Activated CD4-positive, alpha-beta T cell treated with anti-CD3 and anti-CD28 coated beads, Interleukin-2, amount 10 ng/mL, durations not matched to agents 24 days and 14 days (primary cell): ENCODE measurements at regions of chr3 and their contacts with region 1.

Region 1: DNA sequence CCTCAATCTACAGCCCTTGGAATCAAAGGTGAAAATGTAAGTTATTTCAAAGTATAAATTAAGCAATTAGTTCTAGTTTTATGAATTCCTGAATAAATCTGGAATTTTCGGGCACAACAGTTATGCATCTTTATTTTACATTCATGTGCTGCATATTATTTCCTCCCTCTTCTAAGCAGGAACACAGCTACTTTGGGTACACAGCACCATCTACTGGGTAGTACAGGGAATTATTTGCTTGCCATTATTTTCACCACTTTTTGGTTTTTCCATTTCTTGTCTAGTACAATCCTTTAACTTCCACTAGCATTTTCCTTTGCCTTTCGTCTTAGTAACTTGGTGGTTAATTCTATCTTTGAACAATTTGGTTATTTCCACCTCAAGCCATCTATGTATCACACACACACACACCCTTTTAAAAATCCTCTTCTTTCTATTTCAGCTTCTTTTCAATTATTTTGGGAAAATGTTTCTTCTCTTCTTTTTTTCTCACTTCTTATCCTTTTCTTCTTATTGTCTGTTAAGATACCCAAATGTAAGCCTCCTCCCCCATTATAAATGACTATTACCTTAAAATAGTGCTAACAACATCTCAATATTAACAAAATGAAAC is 451.0 kb downstream of the MFSD1 start:
- DNase-seq: no peak
- H3K4me3 Mint-ChIP-seq: no peak overlapping the region
- H3K27ac Mint-ChIP-seq: no peak overlapping the region
- H3K4me1 Mint-ChIP-seq: no peaks in the 10 kb centered on the region
- H3K27me3 Mint-ChIP-seq: no peaks in the 10 kb centered on the region

Region 2: GRCh38 chr3:158918008-158918407 is 334.9 kb before region 1 on chr3:
- intact Hi-C with region 1: loop called (anchors 10 kb)
- DNase-seq: peak; percentile 61
- H3K4me3 Mint-ChIP-seq: no peak overlapping the region
- H3K27ac Mint-ChIP-seq: no peak overlapping the region
- H3K4me1 Mint-ChIP-seq: no peaks in the 10 kb centered on the region
- H3K27me3 Mint-ChIP-seq: no peaks in the 10 kb centered on the region

Region 3: DNA sequence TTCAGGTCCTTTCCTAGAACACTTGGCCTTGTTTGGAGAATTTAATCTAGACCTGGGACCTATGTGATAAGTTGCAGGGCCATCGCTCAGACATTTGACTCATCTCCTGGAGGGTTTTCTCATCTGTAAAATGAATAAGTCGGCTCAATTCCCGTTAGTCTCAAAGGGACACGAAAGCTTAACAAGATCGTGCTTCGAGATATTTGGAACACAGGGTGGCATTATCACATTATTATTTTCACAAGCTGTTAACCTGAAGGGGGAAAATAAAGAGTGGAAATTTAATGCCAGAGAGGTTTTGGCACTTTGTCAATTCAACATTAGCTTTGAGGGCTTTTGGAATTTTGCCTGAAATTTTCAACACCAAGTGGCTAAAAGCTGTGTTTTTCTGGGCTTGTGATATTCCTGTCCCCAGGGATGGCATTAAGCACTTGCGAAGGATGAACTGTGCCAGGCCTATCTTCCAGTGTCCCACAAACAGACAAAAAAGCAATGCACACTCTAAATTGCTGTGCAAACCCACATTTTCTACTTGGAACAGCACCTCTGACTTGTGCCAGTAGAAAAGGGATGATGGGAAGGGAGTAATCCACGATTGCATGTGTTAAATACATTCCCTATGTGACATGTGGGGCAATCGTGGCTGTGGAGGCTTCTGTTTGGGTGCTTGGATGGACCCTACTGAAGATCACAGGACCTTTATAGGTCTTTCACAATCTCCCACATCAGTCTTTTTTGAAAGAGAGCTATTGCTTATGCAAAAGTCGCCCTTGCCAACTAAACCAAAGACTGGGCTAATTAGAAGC is 27.7 kb after region 1 on chr3:
- intact Hi-C with region 1: no loop called
- DNase-seq: no peak
- H3K4me3 Mint-ChIP-seq: no peak overlapping the region
- H3K27ac Mint-ChIP-seq: no peak overlapping the region
- H3K4me1 Mint-ChIP-seq: no peaks in the 10 kb centered on the region
- H3K27me3 Mint-ChIP-seq: no peaks in the 10 kb centered on the region

Region 4: DNA sequence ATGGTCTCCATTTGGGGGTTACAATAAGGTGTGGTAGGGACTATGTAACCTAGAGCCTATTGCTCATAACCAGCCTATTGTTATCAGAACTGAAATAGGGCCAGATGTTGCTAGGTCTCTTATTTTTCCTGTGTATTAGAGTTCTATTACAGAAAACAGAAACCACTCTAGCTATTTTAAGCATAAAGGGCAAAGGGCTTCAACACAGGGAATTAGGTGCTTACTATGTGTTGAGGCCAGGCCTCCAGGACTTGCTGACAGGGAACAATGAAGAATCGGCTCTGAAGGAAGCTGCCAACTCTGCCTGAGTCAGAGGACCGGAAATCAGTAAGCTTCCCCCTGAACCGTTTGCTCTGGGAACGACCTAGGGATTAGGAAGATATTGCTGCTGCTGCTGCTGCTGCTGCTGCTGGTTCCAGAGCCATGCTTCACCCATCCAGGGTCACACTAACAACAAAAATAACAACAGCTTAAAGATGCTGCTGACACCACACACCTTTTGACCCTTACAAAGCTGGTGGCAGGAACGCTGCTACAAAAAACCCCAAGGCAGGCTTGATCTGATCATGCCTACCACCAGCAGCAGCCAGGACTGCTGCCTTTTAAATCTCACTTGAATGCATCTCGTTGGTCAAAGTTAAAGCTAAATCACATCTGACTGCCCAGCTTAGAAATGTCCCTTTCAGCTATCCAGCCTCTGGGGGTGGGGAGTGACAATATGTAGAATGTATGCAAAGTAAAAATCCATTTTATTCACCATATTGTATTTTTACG is 458.9 kb after region 1 on chr3:
- intact Hi-C with region 1: no loop called
- DNase-seq: no peak
- H3K4me3 Mint-ChIP-seq: no peak overlapping the region
- H3K27ac Mint-ChIP-seq: no peak overlapping the region
- H3K4me1 Mint-ChIP-seq: no peaks in the 10 kb centered on the region
- H3K27me3 Mint-ChIP-seq: no peaks in the 10 kb centered on the region